ENCODE measurements at regions of chr13 and their contacts with region 1.

Region 1: GRCh38 chr13:42056146-42056545 is 7.7 kb downstream of the DGKH start:
- DNase-seq: no peak
- ATAC-seq: no peak
- H3K4me3 ChIP-seq: no peak overlapping the region
- H3K4me3 Mint-ChIP-seq: no peak overlapping the region
- H3K27ac ChIP-seq: no peak overlapping the region
- H3K27ac Mint-ChIP-seq: no peak overlapping the region
- H3K4me1 ChIP-seq: no peaks in the 10 kb centered on the region
- H3K4me1 Mint-ChIP-seq: peaks cover 18% of the 10 kb centered on the region
- H3K27me3 ChIP-seq: no peaks in the 10 kb centered on the region
- H3K27me3 Mint-ChIP-seq: no peaks in the 10 kb centered on the region
- CTCF ChIP-seq: no peak

Region 2: GRCh38 chr13:41465241-41465847 is 590.8 kb before region 1 on chr13:
- CTCF ChIA-PET with region 1: no interaction called
- POLR2A ChIA-PET with region 1: no interaction called
- intact Hi-C with region 1: loop called in 1 of 2 experiments (anchors 5 kb)
- DNase-seq: peak; percentile 75 to 95 (median 89)
- ATAC-seq: peak; percentile 72
- H3K4me3 ChIP-seq: peak overlapping the region in 1 of 2 experiments; percentile 6
- H3K4me3 Mint-ChIP-seq: peak overlapping the region; percentile 88
- H3K27ac ChIP-seq: peak overlapping the region; percentile 82 to 91
- H3K27ac Mint-ChIP-seq: peak overlapping the region; percentile 99
- H3K4me1 ChIP-seq: peaks cover 90% of the 10 kb centered on the region
- H3K4me1 Mint-ChIP-seq: peaks cover 92% of the 10 kb centered on the region
- H3K27me3 ChIP-seq: no peaks in the 10 kb centered on the region
- H3K27me3 Mint-ChIP-seq: no peaks in the 10 kb centered on the region
- CTCF ChIP-seq: no peak

Region 3: GRCh38 chr13:42028113-42028799 is 27.9 kb before region 1 on chr13:
- CTCF ChIA-PET with region 1: no interaction called
- POLR2A ChIA-PET with region 1: no interaction called
- intact Hi-C with region 1: no loop called
- DNase-seq: no peak
- ATAC-seq: no peak
- H3K4me3 ChIP-seq: no peak overlapping the region
- H3K4me3 Mint-ChIP-seq: no peak overlapping the region
- H3K27ac ChIP-seq: no peak overlapping the region
- H3K27ac Mint-ChIP-seq: no peak overlapping the region
- H3K4me1 ChIP-seq: no peaks in the 10 kb centered on the region
- H3K4me1 Mint-ChIP-seq: no peaks in the 10 kb centered on the region
- H3K27me3 ChIP-seq: peaks cover 0 to 4% of the 10 kb centered on the region in 2 experiments
- H3K27me3 Mint-ChIP-seq: peaks cover 6% of the 10 kb centered on the region
- CTCF ChIP-seq: no peak

Region 4: GRCh38 chr13:42084722-42085121 is 28.6 kb after region 1 on chr13:
- CTCF ChIA-PET with region 1: no interaction called
- POLR2A ChIA-PET with region 1: no interaction called
- intact Hi-C with region 1: loop called in 1 of 2 experiments (anchors 1 kb)
- DNase-seq: no peak
- ATAC-seq: no peak
- H3K4me3 ChIP-seq: no peak overlapping the region
- H3K4me3 Mint-ChIP-seq: no peak overlapping the region
- H3K27ac ChIP-seq: no peak overlapping the region
- H3K27ac Mint-ChIP-seq: no peak overlapping the region
- H3K4me1 ChIP-seq: no peaks in the 10 kb centered on the region
- H3K4me1 Mint-ChIP-seq: peaks cover 3% of the 10 kb centered on the region
- H3K27me3 ChIP-seq: no peaks in the 10 kb centered on the region
- H3K27me3 Mint-ChIP-seq: no peaks in the 10 kb centered on the region
- CTCF ChIP-seq: no peak

Region 5: GRCh38 chr13:42174344-42175162 is 118.4 kb after region 1 on chr13:
- CTCF ChIA-PET with region 1: no interaction called
- POLR2A ChIA-PET with region 1: no interaction called
- intact Hi-C with region 1: no loop called
- DNase-seq: no peak
- ATAC-seq: no peak
- H3K4me3 ChIP-seq: no peak overlapping the region
- H3K4me3 Mint-ChIP-seq: no peak overlapping the region
- H3K27ac ChIP-seq: no peak overlapping the region
- H3K27ac Mint-ChIP-seq: no peak overlapping the region
- H3K4me1 ChIP-seq: peaks cover 18% of the 10 kb centered on the region
- H3K4me1 Mint-ChIP-seq: peaks cover 16% of the 10 kb centered on the region
- H3K27me3 ChIP-seq: no peaks in the 10 kb centered on the region
- H3K27me3 Mint-ChIP-seq: no peaks in the 10 kb centered on the region
- CTCF ChIP-seq: no peak

Measured in CD8-positive, alpha-beta T cell (primary cell).